ENCODE measurements at regions of chr9 and their contacts with region 1.

Region 1: DNA sequence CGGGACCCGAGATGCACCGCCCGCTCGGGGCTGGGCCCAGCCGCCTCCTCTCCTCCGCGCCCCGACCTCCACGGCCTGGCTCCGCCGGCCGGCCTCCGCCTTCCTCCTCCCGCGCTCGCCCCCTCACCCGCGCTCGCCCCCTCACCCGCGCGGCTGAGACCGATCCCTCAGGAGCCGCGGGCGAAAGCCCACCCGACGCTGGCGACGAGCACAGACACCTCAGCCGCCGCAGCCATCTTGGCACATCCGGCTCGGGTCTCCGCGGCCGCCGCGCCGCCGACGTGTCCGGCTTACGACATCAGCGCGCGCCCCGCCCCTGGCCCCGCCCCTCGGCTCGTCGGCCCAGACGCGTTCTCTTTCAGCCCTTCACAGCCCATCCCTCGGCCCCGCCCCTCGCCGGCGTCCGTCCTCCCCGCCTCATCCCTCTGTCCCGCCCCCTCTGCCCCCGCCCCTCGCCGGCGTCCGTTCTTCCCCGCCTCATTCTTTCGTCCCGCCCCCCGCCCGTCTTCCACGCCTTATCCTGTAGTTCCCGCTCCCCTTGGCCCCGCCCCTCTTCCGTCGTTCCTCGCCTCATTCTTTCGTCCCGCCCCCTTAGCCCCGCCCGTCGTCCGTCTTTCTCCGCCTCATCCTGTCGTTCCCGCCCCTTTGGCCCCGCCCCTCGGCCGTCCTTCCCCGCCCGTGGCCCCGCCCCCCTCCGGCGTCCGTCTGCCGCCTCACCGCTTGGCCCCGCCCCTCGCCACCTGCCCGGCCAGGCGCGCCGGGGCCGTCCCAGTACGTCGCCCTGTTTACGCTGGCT is at the start of gene SEC16A:
- DNase-seq: peak; percentile 97
- H3K4me3 ChIP-seq: peak within 1 kb of the TSS; percentile 86
- H3K27ac ChIP-seq: peak within 1 kb of the TSS; percentile 99
- H3K27me3 ChIP-seq: no peaks in the 10 kb centered on the region
- CTCF ChIP-seq: no peak

Region 2: DNA sequence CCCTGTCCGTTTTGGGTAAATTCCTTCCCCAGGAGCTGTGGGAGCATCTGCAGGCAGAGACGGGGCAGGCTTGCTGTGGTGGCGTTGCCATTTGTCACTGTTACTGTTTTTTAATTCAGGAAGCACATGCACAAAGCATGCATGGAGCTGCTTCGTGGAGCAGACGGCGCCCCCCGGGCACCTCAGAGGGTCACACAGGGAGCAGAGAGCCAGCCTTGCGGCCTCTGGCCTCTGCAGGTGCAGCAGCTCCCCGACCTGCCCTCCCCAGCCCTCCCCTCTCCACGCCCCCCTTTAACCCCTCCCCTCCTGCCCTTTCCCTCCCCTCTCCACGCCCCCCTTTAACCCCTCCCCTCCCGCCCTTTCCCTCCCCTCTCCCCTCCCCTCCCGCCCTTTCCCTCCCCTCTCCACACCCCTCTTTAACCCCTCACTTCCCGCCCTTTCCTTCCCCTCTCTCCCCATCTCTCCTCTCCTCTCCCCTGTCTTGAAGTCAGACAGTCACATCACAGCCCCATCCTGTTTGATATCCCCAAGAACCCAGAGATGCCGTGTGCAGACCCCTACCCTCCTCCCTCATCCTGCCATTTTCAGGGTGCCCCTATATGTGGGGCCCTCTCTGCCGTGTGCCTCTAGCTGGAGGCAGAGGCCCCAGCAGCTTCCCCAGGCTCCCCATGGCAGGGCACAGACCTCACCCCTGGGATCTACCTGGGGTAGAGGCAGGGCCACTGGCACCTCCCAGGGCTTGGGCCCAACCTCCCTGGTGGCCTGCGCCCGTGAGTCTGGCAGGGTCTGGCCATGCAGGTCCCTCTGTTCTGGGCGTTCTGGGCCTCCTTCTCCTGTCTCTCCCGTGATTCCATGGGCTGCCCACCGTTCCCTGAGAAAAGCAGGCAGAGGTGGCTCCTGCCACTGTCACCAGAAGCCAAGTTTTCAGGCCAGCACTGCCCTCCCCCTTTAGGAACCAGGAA is 492.2 kb before region 1 on chr9:
- in situ Hi-C with region 1: no loop called
- DNase-seq: no peak
- H3K4me3 ChIP-seq: no peak overlapping the region
- H3K27ac ChIP-seq: no peak overlapping the region
- H3K27me3 ChIP-seq: peaks cover 2% of the 10 kb centered on the region
- CTCF ChIP-seq: no peak

Region 3: DNA sequence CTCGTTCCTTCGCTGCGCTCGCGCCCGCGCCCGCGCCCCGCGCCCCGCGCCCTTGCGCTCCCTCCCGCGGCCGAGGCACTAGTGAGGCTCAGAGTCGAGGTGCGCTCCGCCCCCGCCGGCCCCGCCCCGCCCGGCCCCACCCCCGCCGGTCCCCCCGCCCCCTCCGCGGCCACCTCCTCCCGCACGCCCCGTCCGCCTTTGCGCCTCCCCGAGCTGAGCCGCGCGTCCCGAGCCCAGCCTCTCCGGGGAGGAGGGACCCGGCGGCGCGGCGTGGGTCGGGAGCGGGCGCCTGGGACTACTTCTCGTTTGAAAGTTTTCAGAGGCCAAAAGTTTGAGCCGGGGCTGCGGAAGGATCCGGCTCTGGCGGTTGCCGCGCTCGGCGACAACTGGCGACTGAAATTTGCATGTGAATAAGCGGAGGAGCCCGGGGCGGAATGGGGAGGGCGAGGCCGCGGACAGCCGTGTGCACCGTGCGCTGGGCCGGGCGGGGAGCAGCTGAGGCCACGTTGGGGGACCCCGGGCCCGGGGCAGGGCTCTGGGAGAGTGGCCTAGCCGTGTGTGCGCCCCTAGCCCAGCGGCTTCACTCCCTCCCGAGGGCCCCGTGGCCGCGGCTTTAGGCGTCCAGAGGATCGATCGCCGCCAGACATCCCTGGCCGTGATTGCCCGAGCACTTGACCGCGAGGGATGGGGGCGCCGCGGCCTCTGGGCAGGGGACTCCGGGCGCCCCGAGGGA is 63.1 kb after region 1 on chr9 and contains the start of gene NOTCH1:
- in situ Hi-C with region 1: loop called (anchors 10 kb)
- DNase-seq: peak; percentile 59
- H3K4me3 ChIP-seq: peak within 1 kb of the TSS; percentile 56
- H3K27ac ChIP-seq: no peak within 1 kb of the TSS
- H3K27me3 ChIP-seq: no peaks in the 10 kb centered on the region
- CTCF ChIP-seq: no peak

Region 4: DNA sequence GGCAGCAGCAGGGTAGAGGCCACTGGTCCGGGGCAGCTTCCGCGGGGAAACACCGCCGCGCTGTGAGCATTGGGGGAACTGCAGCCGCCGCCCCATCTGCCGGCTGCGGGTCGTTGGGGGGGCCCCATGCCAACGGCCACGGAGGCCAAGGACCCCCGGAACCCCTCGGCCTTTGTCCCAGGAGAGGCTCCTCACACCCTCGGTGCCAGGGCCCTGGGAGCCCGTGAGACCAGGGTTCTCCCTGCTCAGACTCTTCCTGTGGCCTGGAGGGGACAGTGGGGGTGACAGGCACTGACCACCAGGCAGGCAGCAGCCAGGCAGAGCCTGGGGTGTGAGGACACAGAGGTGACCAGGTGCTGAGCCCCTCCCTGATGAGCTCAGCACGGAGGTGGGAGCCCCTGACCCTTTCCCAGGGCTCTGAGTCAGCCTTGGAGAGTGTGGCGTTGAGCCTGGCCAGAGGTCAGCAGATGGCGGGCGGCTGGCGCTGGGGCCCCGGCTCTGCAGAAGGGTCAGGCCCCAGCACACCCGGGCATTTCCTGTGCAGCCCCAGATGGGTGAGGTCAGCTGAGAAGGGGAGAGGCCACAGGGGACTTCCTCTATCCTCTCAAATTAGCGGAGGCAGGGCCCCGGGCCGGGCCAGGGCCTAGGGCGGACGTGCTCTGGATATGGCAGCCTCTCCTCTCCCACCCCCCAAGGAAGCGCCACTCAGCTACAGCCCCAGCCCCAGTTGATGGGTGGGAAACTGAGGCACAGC is 161.8 kb after region 1 on chr9:
- in situ Hi-C with region 1: loop called (anchors 5 kb)
- DNase-seq: no peak
- H3K4me3 ChIP-seq: no peak overlapping the region
- H3K27ac ChIP-seq: no peak overlapping the region
- H3K27me3 ChIP-seq: no peaks in the 10 kb centered on the region
- CTCF ChIP-seq: peak; percentile 87